ENCODE measurements at regions of chr2 and their contacts with region 1.

Region 1: DNA sequence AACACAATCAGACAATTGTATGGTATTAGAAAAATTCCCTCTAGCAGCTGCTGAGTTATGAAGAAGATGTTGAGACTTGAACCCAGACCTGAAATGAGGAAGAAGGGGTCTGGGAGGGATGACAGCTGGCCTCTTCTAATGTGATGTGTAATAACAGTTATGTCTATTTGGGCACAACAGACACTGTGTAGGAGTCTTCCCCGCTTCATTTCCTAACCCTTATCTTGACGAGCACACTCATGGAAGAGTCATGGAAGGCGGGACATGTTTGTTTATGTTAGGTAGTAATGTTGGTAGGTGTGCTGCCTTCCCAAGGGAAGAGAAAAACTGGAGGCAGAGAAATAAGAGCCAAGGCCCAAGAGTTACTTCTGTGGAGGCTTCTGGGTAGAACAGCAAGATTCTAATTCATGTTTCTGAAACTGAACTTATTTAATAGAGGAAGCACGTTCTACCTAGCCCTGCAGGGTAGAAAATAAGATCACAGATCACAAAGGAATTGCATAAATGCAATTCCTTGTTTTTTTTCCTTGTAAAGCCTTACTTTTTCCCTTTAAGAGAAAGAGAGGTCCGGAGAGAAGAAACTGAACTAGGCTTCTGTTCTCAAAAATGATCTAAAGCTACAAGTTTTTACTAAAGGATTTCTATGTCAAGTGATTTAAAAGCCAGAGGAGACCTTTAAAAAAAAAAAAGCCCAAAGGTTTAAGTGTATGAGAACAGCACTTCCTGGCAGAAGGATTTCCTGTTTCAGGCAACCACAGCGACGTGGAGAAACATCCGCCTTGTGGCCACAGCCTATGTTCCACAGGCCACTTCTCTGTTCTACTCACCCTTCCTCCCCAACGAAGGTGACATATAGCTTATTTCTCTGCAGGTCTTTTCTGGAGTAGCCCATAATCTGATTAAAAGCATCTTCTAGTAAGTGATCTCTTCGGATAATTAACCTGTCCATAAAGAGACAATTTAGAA is 68.5 kb upstream of the STK17B start:
- DNase-seq: peak; percentile 94
- ATAC-seq: peak; percentile 75
- H3K4me3 Mint-ChIP-seq: peak overlapping the region; percentile 58
- H3K27ac Mint-ChIP-seq: peak overlapping the region; percentile 99
- H3K4me1 Mint-ChIP-seq: peaks cover 86% of the 10 kb centered on the region
- H3K27me3 Mint-ChIP-seq: no peaks in the 10 kb centered on the region

Region 2: DNA sequence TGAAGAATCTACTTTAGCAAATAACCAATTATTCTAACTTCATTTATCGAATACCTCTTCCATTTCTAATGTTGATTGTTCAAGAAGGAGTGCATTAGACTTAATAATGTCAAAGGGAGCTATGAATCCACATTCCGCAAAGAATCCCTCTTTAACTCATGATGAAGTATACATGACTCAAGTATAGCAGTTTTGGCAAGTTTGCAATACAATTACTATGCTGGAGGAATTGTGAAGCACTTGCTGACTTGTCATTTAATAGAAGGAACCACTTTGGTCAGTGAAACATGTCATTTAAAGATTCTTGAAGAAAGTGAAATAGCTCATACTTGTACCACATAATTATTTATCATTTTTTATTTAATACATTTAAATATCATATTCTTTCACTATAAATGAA is 457.7 kb before region 1 on chr2:
- CTCF ChIA-PET with region 1: no interaction called
- POLR2A ChIA-PET with region 1: no interaction called
- DNase-seq: no peak
- ATAC-seq: no peak
- H3K4me3 Mint-ChIP-seq: no peak overlapping the region
- H3K27ac Mint-ChIP-seq: no peak overlapping the region
- H3K4me1 Mint-ChIP-seq: no peaks in the 10 kb centered on the region
- H3K27me3 Mint-ChIP-seq: no peaks in the 10 kb centered on the region

Region 3: DNA sequence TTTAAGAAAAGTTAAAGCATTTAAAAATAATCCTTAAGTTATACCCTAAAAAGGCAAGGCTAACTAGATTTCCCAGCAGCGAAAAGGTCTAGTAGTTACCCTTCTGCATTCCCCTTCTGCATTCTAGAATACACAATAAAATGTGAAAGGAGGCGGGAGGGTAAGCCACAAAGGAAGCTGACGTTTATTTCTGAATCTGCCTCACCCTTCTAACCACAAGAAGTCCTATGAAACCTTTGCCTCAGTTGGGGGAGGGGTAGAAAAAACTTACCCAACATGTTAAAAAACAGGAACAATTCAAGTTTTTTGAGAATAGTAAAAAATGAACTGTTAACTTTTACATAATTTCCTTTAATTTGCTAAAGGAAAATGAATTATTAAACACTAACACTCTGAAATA is 79.8 kb before region 1 on chr2:
- CTCF ChIA-PET with region 1: interaction called, 3 read pairs
- POLR2A ChIA-PET with region 1: interaction called, 122 read pairs
- DNase-seq: peak; percentile 88
- ATAC-seq: peak; percentile 35
- H3K4me3 Mint-ChIP-seq: peak overlapping the region; percentile 66
- H3K27ac Mint-ChIP-seq: peak overlapping the region; percentile 82
- H3K4me1 Mint-ChIP-seq: peaks cover 50% of the 10 kb centered on the region
- H3K27me3 Mint-ChIP-seq: no peaks in the 10 kb centered on the region

Region 4: DNA sequence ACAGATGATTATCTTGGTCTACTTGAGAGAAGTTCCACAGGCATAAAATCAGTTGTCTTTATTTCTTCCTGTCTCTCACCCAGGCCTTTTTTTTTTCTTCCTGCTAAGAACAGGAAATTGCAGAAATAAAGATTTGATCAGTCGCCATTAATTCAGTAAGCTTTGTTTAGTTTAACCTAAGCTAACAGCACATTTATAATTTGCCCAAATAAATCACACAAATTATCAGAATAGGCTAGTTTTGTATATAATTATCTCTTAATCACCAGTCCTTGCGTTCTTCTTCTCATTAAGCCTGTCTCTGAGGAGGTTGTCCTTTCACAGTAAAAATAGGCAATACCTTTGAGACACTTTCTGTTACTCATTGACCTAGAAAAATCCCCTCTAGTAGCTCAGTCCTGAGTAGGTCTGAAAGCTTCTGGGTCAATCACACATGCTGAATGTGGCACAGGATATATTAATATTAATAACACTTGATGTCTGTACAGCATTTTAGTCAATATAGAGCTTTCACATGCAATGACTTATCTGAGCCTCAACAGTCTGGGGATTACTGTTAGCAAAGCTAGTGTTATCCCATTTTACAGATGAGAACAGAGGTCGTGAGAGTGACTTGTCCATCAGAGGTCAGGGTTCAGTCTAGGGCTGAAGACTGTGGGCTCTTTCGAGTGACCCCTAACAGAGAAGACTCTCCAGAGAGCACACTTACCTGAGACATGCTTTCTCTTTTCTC is 57.3 kb before region 1 on chr2:
- CTCF ChIA-PET with region 1: interaction called, 80 read pairs
- POLR2A ChIA-PET with region 1: interaction called, 114 read pairs
- DNase-seq: no peak
- ATAC-seq: peak; percentile 13
- H3K4me3 Mint-ChIP-seq: peak overlapping the region; percentile 62
- H3K27ac Mint-ChIP-seq: peak overlapping the region; percentile 95
- H3K4me1 Mint-ChIP-seq: peaks cover 89% of the 10 kb centered on the region
- H3K27me3 Mint-ChIP-seq: no peaks in the 10 kb centered on the region